ENCODE measurements at regions of chr2 and their contacts with region 1.

Region 1: GRCh38 chr2:188524519-188525113 is 232.9 kb downstream of the GULP1 start:
- DNase-seq: no peak

Region 2: DNA sequence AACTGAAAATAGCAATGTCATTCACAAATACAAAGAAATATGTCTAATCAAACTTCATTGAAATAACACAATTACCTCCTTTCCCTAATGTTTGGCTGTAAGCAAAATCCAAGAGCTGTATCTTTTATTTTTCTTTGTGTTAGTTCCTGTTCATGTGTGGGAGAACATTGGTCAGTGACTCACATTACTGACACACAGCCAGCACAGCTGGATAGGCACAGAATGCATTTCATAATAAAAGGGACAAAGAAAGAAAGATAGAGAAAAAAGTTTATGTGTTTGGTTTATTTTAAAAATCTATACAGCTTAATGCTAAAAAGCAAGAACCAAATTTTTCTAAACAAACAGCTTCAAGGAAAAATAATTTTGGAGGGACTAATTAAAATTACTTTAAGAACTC is 264.0 kb after region 1 on chr2:
- intact Hi-C with region 1: loop called (anchors 5 kb)
- DNase-seq: no peak

Region 3: DNA sequence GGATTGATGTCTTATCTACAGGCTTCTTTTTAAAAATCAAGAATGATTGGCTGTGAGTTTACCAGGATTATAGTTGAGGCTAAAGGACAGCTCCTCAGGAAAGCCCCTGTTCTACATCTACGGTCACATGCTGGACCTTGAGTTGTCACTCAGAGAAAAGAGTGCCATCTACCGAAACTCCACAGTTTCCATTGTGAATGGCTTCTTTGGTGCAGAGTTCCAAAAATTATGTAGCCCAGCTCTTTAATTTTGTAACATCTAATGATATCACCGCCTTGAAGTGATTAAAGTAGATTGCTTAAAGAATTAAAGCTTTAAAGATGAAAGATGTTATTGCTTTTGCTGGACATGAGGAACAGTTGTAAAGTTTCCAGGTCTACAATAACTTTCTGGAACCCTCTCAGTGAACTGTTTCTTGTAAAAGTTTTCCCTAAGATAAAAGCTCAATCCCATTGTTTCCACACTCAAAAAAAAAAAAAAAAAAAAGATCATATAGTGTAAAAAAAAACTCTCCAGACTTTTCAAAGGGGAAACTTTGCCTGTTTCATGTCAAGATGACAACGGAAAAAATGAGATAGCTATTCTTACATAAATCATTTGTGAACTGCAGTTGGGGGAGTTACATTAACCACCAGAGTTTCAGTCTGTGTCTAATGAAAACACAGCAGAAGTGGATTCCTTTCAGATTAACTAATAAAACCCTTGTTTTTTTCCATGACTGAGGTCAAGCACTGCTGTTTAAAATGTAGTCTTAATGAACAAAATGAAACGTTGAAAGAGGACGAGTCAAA is 453.9 kb after region 1 on chr2:
- intact Hi-C with region 1: loop called (anchors 1 kb)
- DNase-seq: no peak

Region 4: GRCh38 chr2:189287982-189288521 is 763.4 kb after region 1 on chr2:
- intact Hi-C with region 1: loop called (anchors 5 kb)
- DNase-seq: no peak

Region 5: GRCh38 chr2:189412330-189412953 is 887.8 kb after region 1 on chr2:
- intact Hi-C with region 1: loop called (anchors 5 kb)
- DNase-seq: no peak